ENCODE measurements at regions of chr10 and their contacts with region 1.

Region 1: GRCh38 chr10:46094931-46095750 is 49.1 kb upstream of the MSMB start:
- DNase-seq: no peak
- ATAC-seq: no peak
- H3K4me3 ChIP-seq: no peak overlapping the region
- H3K27ac ChIP-seq: no peak overlapping the region
- H3K4me1 ChIP-seq: no peaks in the 10 kb centered on the region; the same call in 1 of the 2 replicates
- H3K27me3 ChIP-seq: no peaks in the 10 kb centered on the region; the same call in 1 of the 2 replicates
- CTCF ChIP-seq: no peak
- POLR2A ChIP-seq: no peak
- RAD21 ChIP-seq: no peak

Region 2: DNA sequence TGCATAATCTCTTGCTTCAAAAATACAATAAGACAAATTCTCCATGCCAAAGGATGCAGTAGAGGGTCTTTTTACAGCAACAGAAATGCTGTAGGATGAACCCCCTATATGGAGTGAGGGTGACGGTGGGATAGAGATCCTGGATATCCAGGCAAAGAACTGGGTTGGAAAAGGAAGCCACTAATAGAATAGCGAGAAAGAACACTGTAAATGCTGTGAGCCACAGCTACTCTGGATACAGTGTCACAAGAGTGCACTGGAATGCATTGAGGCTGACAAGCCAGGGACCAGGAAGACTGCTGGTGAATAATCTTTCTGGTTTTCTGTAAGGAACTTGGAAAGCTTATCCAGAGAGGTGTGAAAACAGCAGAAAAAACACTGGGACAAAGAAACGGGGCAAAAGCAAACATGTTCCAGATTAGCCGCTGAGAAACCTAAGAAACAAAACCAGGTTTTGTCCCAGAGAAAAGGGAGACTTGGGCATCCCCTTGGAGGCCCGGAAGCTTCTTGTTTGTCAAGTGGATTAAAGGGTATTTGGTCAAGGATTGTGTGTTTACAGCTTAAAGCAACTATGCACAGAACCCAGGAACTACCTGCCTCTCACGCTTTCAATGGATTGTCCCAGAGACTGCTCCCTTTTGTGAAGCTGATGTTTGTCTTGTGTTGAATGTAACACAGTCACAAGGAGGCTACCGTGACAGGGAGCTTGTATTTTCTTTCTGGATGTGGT is 42.9 kb before region 1 on chr10:
- CTCF ChIA-PET with region 1: no interaction called
- POLR2A ChIA-PET with region 1: no interaction called
- dilution Hi-C with region 1: no loop called
- in situ Hi-C with region 1: no loop called
- intact Hi-C with region 1: no loop called
- DNase-seq: no peak
- ATAC-seq: no peak
- H3K4me3 ChIP-seq: no peak overlapping the region
- H3K27ac ChIP-seq: no peak overlapping the region
- H3K4me1 ChIP-seq: no peaks in the 10 kb centered on the region
- H3K27me3 ChIP-seq: peaks cover 35% of the 10 kb centered on the region
- CTCF ChIP-seq: no peak
- POLR2A ChIP-seq: no peak
- RAD21 ChIP-seq: no peak

Region 3: DNA sequence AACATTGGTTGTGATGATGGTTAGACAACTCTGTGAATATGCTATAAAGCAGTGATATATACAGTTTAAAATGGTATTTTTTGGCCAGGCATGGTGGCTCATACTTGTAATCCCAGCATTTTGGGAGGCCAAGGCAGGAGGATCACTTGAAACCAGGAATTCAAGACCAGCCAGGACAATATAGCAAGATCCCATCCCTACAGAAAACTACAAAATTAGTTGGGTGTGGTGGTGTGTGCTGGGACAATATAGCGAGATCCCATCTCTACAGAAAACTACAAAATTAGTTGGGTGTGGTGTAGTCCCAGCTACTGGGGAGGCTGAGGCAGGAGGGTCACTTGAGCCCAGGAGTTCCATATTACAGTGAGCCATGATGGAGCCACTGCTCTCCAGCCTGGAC is 21.6 kb before region 1 on chr10:
- CTCF ChIA-PET with region 1: no interaction called
- POLR2A ChIA-PET with region 1: no interaction called
- dilution Hi-C with region 1: no loop called
- in situ Hi-C with region 1: no loop called
- intact Hi-C with region 1: loop called (anchors 2 kb)
- DNase-seq: no peak
- ATAC-seq: no peak
- H3K4me3 ChIP-seq: no peak overlapping the region
- H3K27ac ChIP-seq: no peak overlapping the region
- H3K4me1 ChIP-seq: peaks cover 3% of the 10 kb centered on the region; the same call in 1 of the 2 replicates
- H3K27me3 ChIP-seq: peaks cover 2% of the 10 kb centered on the region
- CTCF ChIP-seq: no peak
- POLR2A ChIP-seq: no peak
- RAD21 ChIP-seq: no peak

Region 4: DNA sequence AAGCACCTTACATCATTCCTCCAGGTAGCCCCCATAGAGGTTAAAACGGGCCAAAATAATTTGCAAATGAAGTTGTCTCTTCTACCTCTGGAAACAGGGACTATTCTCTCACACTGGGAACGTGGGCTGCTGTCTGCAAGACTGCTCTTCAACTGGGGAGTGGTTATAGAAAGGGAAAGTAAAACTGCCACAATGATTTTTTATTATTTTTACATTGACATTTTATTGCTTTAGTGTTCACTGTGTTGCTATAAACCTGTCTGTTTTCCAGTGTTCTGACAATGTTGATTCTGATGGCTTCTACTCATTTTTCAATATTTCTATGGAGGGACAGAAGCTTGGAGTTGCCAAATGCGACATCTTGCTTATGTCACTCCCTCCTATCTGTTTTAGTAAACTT is 76.5 kb after region 1 on chr10:
- CTCF ChIA-PET with region 1: no interaction called
- POLR2A ChIA-PET with region 1: no interaction called
- dilution Hi-C with region 1: no loop called
- in situ Hi-C with region 1: no loop called
- intact Hi-C with region 1: no loop called
- DNase-seq: no peak
- ATAC-seq: no peak
- H3K4me3 ChIP-seq: no peak overlapping the region
- H3K27ac ChIP-seq: no peak overlapping the region
- H3K4me1 ChIP-seq: no peaks in the 10 kb centered on the region
- H3K27me3 ChIP-seq: peaks cover 3% of the 10 kb centered on the region; the same call in 1 of the 2 replicates
- CTCF ChIP-seq: no peak
- POLR2A ChIP-seq: no peak
- RAD21 ChIP-seq: no peak

Region 5: GRCh38 chr10:47425813-47426419 is 1330.8 kb after region 1 on chr10:
- CTCF ChIA-PET with region 1: no interaction called
- POLR2A ChIA-PET with region 1: no interaction called
- dilution Hi-C with region 1: no loop called
- in situ Hi-C with region 1: no loop called
- intact Hi-C with region 1: no loop called
- DNase-seq: no peak
- ATAC-seq: no peak
- H3K4me3 ChIP-seq: no peak overlapping the region
- H3K27ac ChIP-seq: no peak overlapping the region
- H3K4me1 ChIP-seq: peaks cover 4% of the 10 kb centered on the region
- H3K27me3 ChIP-seq: peaks cover 19% of the 10 kb centered on the region
- CTCF ChIP-seq: no peak
- POLR2A ChIP-seq: no peak
- RAD21 ChIP-seq: no peak

Measured in IMR-90 (cell line).